HEK293T (cell line): ENCODE measurements at regions of chr13 and their contacts with region 1.

Region 1: DNA sequence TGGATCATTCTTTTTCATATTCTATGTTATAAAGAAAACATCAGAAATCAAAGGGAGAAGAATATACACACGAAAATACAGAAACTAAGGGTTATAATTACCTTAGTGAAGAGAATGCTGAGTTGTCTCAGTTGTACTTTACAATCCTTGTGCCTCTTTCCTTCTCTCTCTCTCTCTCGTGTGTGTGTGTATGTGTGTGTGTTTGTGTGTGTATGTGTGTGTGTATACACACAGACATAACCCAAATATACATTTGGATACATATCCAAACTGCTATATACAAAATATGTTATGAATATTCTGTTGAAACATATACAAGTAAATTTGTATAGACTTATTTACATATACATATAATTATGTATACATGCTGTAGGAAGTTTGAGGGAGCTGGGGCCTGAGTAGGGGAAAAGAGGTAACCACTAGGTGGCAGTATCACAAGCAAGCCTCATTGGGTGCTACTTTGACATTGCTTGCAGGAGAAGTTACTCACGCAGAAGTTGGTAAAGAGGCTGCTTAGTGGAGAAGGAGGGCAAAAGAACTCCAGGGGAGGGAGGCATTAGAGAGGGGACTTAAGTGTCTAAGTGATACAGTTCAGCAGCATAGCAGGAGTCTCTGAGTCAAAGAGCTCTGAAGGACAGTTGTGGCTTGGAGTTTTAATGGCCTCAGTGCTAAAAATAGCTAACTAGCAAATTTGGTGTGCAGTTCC is 465.1 kb upstream of the PCDH20 start:
- DNase-seq: peak; percentile 97

Region 2: DNA sequence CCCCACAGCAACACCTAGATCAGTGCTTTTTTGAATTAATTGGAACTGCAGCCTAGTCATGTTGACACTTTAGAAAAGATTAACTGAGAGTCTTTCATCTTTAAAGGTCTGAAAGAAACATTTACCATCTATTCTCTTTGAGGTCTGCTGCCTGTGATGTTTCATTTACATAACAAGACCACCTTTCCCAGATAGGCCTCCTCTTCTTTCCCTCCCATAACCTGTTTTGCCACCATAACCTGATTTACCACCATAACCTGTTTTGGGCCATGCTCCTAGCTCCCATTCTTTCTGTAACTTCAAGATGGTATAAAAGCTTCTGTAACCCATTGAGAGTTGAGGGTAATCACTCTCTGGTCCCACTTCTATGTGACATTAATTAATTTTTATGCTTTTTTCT is 785.9 kb before region 1 on chr13:
- CTCF ChIA-PET with region 1: no interaction called
- POLR2A ChIA-PET with region 1: no interaction called
- DNase-seq: no peak

Region 3: DNA sequence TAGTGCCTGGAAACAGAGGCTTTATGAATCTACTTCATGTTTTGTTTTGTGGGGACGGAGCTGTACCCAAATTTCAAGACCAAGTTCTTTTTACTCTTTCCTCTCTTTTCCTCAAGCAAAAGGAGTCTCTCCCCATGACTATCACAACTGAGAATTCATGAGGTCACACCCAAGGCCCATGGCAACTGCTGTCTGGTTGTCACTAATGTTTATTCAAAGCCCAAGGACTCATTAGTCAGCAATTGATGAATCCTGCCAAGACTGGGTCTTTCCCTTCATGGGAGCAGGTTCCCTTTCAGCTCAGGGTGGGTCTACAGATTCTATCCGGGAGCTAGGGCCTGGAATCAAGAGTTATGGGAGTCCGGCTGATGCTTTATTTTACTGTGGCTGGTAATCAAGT is 23.5 kb before region 1 on chr13:
- CTCF ChIA-PET with region 1: interaction called, 12 read pairs
- POLR2A ChIA-PET with region 1: interaction called, 4 read pairs
- DNase-seq: no peak

Region 4: GRCh38 chr13:61891401-61891800 is 10.7 kb after region 1 on chr13:
- CTCF ChIA-PET with region 1: interaction called, 38 read pairs
- POLR2A ChIA-PET with region 1: no interaction called
- DNase-seq: no peak

Region 5: DNA sequence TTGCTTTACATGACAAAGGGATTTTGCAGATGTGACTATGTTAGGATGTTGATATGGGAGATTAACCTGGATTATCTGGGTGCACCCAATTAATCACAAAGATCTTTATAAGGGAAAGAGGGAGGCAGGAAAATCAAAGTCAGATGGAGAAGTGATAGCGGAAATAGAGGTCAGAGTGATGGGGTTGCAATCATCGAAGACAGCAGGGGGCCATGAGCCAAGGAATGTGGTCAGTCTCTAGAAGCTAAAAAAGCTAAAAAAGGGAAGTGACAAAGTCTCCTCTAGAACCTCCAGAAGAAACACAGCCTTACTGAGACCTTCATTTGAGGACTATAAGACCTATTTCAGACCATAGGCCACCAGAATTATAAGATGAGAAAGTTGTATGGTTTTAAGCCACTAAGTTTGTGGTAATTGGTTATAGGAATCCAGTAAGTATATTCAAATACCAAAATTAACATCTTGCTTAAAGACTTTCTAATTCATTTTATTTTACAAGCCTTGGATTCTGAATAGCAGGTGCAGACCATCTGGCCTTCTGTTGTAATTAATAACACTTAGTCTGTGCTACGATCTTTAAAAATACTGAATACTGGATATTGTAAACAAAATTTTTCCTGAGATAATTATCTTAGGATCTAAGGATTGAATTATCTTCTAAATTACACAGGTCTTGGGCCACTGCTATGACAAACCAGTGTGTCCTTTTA is 28.3 kb after region 1 on chr13:
- CTCF ChIA-PET with region 1: interaction called, 10 read pairs
- POLR2A ChIA-PET with region 1: no interaction called
- DNase-seq: no peak

Region 6: GRCh38 chr13:61954092-61954491 is 73.4 kb after region 1 on chr13:
- CTCF ChIA-PET with region 1: interaction called, 15 read pairs
- POLR2A ChIA-PET with region 1: interaction called, 3 read pairs
- DNase-seq: peak; percentile 84